Esophagus squamous epithelium (tissue), 5 donors: ENCODE measurements at regions of chr16 and their contacts with region 1.

Region 1: GRCh38 chr16:75206749-75207451 is at the start of gene CTRB2:
- DNase-seq: no peak
- H3K4me3 ChIP-seq: no peak within 1 kb of the TSS
- H3K27ac ChIP-seq: no peak within 1 kb of the TSS
- H3K4me1 ChIP-seq: no peaks in the 10 kb centered on the region
- H3K27me3 ChIP-seq: peaks cover 0 to 16% (median 0%) of the 10 kb centered on the region in 4 donors
- CTCF ChIP-seq: no peak
- POLR2A ChIP-seq: no peak
- total RNA-seq, gene CTRB2: not detected

Region 2: GRCh38 chr16:75074920-75075687 is 131.8 kb before region 1 on chr16:
- intact Hi-C with region 1: no loop called
- DNase-seq: peak; percentile 44
- H3K4me3 ChIP-seq: no peak overlapping the region
- H3K27ac ChIP-seq: peak overlapping the region in 2 of 4 donors; percentile 37 to 39
- H3K4me1 ChIP-seq: peaks cover 0 to 57% (median 8%) of the 10 kb centered on the region in 3 donors
- H3K27me3 ChIP-seq: no peaks in the 10 kb centered on the region
- CTCF ChIP-seq: no peak
- POLR2A ChIP-seq: no peak

Region 3: GRCh38 chr16:75116081-75116910 is 90.6 kb before region 1 on chr16 and contains the start of gene LDHD:
- intact Hi-C with region 1: no loop called
- DNase-seq: no peak
- H3K4me3 ChIP-seq: peak within 1 kb of the TSS; percentile 33 to 62 (median 49)
- H3K27ac ChIP-seq: peak within 1 kb of the TSS in 3 of 4 donors; percentile 17 to 63 (median 58)
- H3K4me1 ChIP-seq: peaks cover 16 to 52% (median 19%) of the 10 kb centered on the region in 3 donors
- H3K27me3 ChIP-seq: no peaks in the 10 kb centered on the region
- CTCF ChIP-seq: no peak
- POLR2A ChIP-seq: peak in 1 of 4 donors; percentile 62
- total RNA-seq, gene LDHD: 3.3 to 20.4 (median 10.4) TPM

Region 4: GRCh38 chr16:75224306-75225091 is 17.6 kb after region 1 on chr16:
- intact Hi-C with region 1: loop called (anchors 1 kb)
- DNase-seq: no peak
- H3K4me3 ChIP-seq: no peak overlapping the region
- H3K27ac ChIP-seq: no peak overlapping the region
- H3K4me1 ChIP-seq: no peaks in the 10 kb centered on the region
- H3K27me3 ChIP-seq: peaks cover 0 to 32% (median 0%) of the 10 kb centered on the region in 4 donors
- CTCF ChIP-seq: no peak
- POLR2A ChIP-seq: no peak

Region 5: DNA sequence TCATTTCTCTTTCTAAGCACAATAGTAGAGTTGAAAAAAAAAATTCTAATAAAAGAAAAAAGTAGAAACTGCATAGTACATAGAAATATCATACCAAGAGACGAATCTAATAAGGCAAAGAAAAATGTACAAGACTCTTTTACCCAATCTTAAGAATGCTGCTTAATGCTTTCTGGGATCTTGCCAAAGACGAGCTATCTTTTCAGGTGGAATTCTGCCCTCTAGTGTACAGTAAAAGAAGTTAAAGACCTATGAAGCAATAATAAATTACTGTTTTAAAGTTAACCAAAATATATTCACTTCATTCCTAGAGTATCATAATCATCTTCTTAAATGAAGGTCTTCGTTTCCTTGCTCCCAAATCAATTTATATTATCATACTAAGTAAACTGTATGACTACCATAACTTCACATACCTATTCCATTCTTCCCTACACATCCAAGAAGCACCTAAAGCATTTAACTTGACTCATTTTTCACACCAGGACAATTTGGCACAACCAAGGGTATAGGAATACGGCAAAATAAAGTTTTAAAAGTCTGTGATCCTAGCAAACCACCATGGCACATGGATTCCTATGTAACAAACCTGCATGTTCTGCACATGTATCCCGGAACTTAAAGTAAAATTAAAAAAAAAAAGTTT is 178.7 kb after region 1 on chr16:
- intact Hi-C with region 1: loop called (anchors 10 kb)
- DNase-seq: no peak
- H3K4me3 ChIP-seq: no peak overlapping the region
- H3K27ac ChIP-seq: no peak overlapping the region
- H3K4me1 ChIP-seq: peaks cover 0 to 48% (median 18%) of the 10 kb centered on the region in 3 donors
- H3K27me3 ChIP-seq: no peaks in the 10 kb centered on the region
- CTCF ChIP-seq: peak; percentile 45 to 85 (median 64)
- POLR2A ChIP-seq: no peak